HepG2 (cell line): ENCODE measurements at regions of chr11 and their contacts with region 1.

Region 1: GRCh38 chr11:125902927-125903710 is at the start of gene PUS3:
- DNase-seq: peak; percentile 78
- ATAC-seq: peak; percentile 98
- H3K4me3 ChIP-seq: peak within 1 kb of the TSS; percentile 75 to 95 (median 76)
- H3K27ac ChIP-seq: peak within 1 kb of the TSS; percentile 54
- H3K4me1 ChIP-seq: peaks cover 13% of the 10 kb centered on the region
- H3K27me3 ChIP-seq: no peaks in the 10 kb centered on the region; a peak in 1 of 5 replicates
- CTCF ChIP-seq: no peak
- EP300 ChIP-seq: no peak
- POLR2A ChIP-seq: peak; percentile 73 to 77
- RAD21 ChIP-seq: no peak
- total RNA-seq, gene PUS3: 18.2 and 22.9 TPM in 2 replicates

Region 2: GRCh38 chr11:125887373-125888324 is 15.5 kb before region 1 on chr11 and contains the start of gene HYLS1:
- CTCF ChIA-PET with region 1: no interaction called
- POLR2A ChIA-PET with region 1: interaction called, 17 read pairs
- in situ Hi-C with region 1: no loop called
- intact Hi-C with region 1: no loop called
- DNase-seq: peak; percentile 72
- ATAC-seq: peak; percentile 95
- H3K4me3 ChIP-seq: peak within 1 kb of the TSS; percentile 65 to 78 (median 73)
- H3K27ac ChIP-seq: peak within 1 kb of the TSS; percentile 89
- H3K4me1 ChIP-seq: peaks cover 38% of the 10 kb centered on the region
- H3K27me3 ChIP-seq: no peaks in the 10 kb centered on the region
- CTCF ChIP-seq: peak; percentile 33
- EP300 ChIP-seq: no peak
- POLR2A ChIP-seq: peak; percentile 56 to 70
- RAD21 ChIP-seq: peak; percentile 24; the same call in 1 of the 2 replicates
- total RNA-seq, gene HYLS1: 3.8 and 5.6 TPM in 2 replicates

Region 3: DNA sequence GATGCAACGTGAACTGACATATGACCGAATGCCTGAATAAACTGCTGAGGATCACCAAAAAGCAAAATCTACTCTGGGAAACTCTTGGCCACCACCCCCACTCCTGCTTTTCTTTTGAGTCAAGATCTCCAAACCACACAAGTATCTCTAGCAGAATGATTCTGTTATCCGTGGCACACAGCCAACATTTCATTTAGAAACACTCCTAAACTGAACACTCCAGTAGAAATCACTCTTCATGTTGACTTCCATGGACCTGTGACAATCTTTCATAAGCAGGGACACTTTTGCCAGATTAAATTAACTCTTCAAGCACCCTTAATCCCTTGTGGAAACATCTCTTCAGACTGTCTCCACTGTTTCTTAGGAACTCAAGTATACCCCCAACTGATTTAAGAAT is 87.1 kb after region 1 on chr11:
- CTCF ChIA-PET with region 1: no interaction called
- POLR2A ChIA-PET with region 1: no interaction called
- in situ Hi-C with region 1: no loop called
- intact Hi-C with region 1: no loop called
- DNase-seq: no peak
- ATAC-seq: no peak
- H3K4me3 ChIP-seq: no peak overlapping the region
- H3K27ac ChIP-seq: no peak overlapping the region
- H3K4me1 ChIP-seq: peaks cover 27% of the 10 kb centered on the region
- H3K27me3 ChIP-seq: no peaks in the 10 kb centered on the region
- CTCF ChIP-seq: no peak
- EP300 ChIP-seq: no peak
- POLR2A ChIP-seq: no peak
- RAD21 ChIP-seq: no peak